ENCODE measurements at regions of chr20 and their contacts with region 1.

Region 1: DNA sequence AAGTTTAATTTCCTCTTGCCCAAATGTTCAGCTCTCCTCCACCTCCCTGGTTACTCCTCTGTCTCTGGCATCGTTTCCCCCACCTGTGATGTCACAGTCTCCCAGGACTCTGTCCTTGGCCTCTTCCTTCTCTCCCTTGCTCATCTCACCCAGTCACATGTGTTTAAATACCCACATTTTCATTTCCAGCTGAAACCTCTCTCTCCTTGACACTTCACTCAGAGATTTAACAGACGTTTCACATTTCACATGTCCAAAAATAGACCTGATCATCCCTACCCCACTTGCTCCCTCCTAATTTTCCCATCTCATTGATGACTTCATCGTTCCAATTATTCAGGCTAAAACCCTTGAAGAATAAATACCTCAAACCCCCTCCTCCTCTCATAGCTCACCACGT is 604.1 kb upstream of the JAG1 start:
- H3K4me3 ChIP-seq: no peak overlapping the region
- H3K27ac ChIP-seq: no peak overlapping the region
- H3K4me1 ChIP-seq: no peaks in the 10 kb centered on the region
- CTCF ChIP-seq: no peak

Region 2: GRCh38 chr20:11261533-11262000 is 16.3 kb before region 1 on chr20:
- CTCF ChIA-PET with region 1: no interaction called
- POLR2A ChIA-PET with region 1: no interaction called
- H3K4me3 ChIP-seq: no peak overlapping the region
- H3K27ac ChIP-seq: no peak overlapping the region
- H3K4me1 ChIP-seq: 0 out of 2 replicates have a peak, but pooled peaks cover under 1% of the 10 kb centered on the region
- CTCF ChIP-seq: no peak

Region 3: DNA sequence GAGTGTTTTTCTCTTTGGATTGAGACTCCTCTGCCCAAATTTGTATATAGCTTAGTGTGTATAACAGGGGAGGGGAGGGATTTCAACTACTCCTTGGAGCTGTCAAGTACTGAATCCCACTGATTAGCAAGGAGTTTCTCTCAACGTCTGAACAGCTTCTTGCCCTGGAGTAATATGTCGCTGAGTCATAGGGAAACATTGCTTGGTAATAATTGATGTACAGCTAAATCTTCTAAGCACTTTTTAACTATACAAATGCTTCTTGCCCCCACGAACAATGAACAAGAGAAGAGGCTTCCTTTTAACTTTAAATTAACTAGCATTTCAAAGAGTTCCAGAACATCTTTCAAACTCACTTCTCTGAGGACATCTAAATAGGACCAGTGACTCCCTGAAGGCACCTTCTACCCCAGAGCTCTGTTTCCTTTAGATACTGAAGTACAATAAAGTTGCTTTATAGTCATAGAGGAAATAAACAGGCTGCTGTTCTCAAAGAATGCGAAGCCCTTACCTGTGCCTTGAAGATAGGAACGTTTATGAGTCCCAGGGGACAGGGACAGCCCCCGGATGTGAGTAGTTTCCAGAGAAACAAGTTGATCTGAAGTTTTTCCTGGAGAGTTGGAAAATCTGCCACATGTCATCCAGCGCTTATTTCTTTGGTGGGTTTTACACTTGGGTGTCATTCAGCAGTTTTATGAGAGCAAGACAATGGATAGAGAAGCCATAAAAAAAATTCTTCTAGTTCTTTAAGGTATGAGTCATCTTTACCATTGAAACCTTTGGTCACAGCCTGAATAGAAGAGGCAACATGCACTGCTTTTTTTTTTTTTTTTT is 177.3 kb after region 1 on chr20:
- CTCF ChIA-PET with region 1: no interaction called
- POLR2A ChIA-PET with region 1: interaction called, 12 read pairs
- H3K4me3 ChIP-seq: peak overlapping the region; percentile 28
- H3K27ac ChIP-seq: no peak overlapping the region
- H3K4me1 ChIP-seq: peaks cover 9% of the 10 kb centered on the region; the same call in 1 of the 2 replicates
- CTCF ChIP-seq: no peak

Measured in HEK293 (cell line).